ENCODE measurements at regions of chr3 and their contacts with region 1.

Region 1: GRCh38 chr3:70120357-70121121 is 121.0 kb downstream of the SAMMSON start:
- DNase-seq: peak; percentile 63
- H3K4me3 ChIP-seq: no peak overlapping the region
- H3K27ac ChIP-seq: no peak overlapping the region
- H3K4me1 ChIP-seq: no peaks in the 10 kb centered on the region
- H3K27me3 ChIP-seq: no peaks in the 10 kb centered on the region
- CTCF ChIP-seq: peak; percentile 75 to 84
- POLR2A ChIP-seq: no peak

Region 2: DNA sequence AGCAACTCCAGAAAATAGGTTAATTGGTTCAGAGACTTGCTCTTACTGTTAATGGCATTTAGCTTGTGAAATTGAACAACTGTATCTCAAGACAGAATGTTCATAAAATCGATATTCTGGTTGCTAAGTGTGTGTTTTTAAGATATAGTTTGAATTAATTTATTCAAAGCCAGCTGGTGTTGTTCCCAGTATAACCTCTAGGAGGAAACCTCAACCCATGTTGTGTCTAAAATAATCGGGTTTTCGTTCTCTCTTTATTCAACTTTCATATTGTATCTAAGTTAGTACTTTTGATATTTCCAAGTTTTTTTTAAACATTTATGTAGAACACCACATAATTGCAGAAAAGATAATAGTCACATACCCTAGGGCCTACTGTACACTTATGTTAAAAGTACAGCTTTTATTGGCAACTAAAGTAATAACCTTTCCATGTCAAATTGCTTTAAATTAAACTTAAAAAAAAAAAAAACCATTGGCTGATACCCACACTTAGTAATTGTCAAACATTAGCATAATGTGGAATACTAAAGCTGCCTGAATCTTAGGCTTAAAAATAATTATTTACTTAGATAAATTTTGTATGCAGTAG is 30.1 kb before region 1 on chr3:
- CTCF ChIA-PET with region 1: interaction called, 13 read pairs
- POLR2A ChIA-PET with region 1: no interaction called
- dilution Hi-C with region 1: no loop called
- intact Hi-C with region 1: no loop called
- DNase-seq: peak; percentile 52
- H3K4me3 ChIP-seq: no peak overlapping the region
- H3K27ac ChIP-seq: no peak overlapping the region
- H3K4me1 ChIP-seq: no peaks in the 10 kb centered on the region
- H3K27me3 ChIP-seq: no peaks in the 10 kb centered on the region
- CTCF ChIP-seq: peak; percentile 42 to 52
- POLR2A ChIP-seq: no peak

Region 3: GRCh38 chr3:70137366-70137765 is 16.8 kb after region 1 on chr3:
- CTCF ChIA-PET with region 1: interaction called, 27 read pairs
- POLR2A ChIA-PET with region 1: no interaction called
- dilution Hi-C with region 1: no loop called
- intact Hi-C with region 1: no loop called
- DNase-seq: no peak
- H3K4me3 ChIP-seq: no peak overlapping the region
- H3K27ac ChIP-seq: no peak overlapping the region
- H3K4me1 ChIP-seq: no peaks in the 10 kb centered on the region
- H3K27me3 ChIP-seq: no peaks in the 10 kb centered on the region
- CTCF ChIP-seq: no peak
- POLR2A ChIP-seq: no peak

Region 4: DNA sequence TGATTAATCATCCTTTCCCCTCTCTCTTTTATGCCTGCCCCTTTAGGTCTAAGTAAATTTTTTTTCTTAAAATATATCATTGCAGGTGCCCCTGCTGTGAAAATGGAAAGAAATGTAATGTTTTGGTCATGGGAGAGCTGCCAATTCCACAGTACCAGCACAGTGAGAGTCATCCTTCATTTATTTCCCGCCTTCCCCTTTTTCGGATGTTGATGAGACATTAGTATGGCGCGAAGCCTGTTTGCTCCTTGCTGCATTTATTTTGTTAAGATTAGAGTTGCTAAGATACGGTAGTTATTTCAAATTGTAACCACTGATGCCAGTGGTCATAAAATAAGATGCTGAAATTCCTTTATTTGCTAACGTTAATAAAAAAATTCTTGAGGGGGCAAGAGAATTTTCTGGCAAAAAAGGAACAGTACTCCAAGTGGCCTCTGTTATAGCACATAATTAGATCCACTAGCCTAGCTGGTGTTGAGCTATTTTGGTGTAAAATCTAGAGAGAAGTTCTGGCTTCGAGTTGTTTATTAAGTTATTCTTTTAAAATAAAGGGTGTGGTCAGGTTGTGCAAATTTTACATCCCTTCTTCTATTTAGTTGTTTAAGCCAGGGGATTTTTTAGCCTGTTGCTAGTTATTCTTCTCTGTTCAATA is 129.1 kb after region 1 on chr3:
- CTCF ChIA-PET with region 1: interaction called, 5 read pairs
- POLR2A ChIA-PET with region 1: no interaction called
- dilution Hi-C with region 1: no loop called
- intact Hi-C with region 1: loop called (anchors 5 kb)
- DNase-seq: peak; percentile 96
- H3K4me3 ChIP-seq: no peak overlapping the region
- H3K27ac ChIP-seq: peak overlapping the region; percentile 87
- H3K4me1 ChIP-seq: peaks cover 34% of the 10 kb centered on the region
- H3K27me3 ChIP-seq: no peaks in the 10 kb centered on the region
- CTCF ChIP-seq: no peak
- POLR2A ChIP-seq: peak; percentile 17

Region 5: GRCh38 chr3:71652781-71653413 is 1532.4 kb after region 1 on chr3:
- CTCF ChIA-PET with region 1: interaction called, 11 read pairs
- POLR2A ChIA-PET with region 1: no interaction called
- dilution Hi-C with region 1: no loop called
- intact Hi-C with region 1: no loop called
- DNase-seq: peak; percentile 78
- H3K4me3 ChIP-seq: no peak overlapping the region
- H3K27ac ChIP-seq: no peak overlapping the region
- H3K4me1 ChIP-seq: peaks cover 9% of the 10 kb centered on the region
- H3K27me3 ChIP-seq: no peaks in the 10 kb centered on the region
- CTCF ChIP-seq: peak; percentile 17 to 42
- POLR2A ChIP-seq: no peak